ENCODE measurements at regions of chr10 and their contacts with region 1.

Region 1: GRCh38 chr10:43619368-43619767 is 13.1 kb downstream of the ZNF485 start:
- DNase-seq: no peak
- ATAC-seq: no peak
- H3K4me3 ChIP-seq: no peak overlapping the region
- H3K27ac ChIP-seq: no peak overlapping the region
- H3K4me1 ChIP-seq: no peaks in the 10 kb centered on the region
- H3K27me3 ChIP-seq: no peaks in the 10 kb centered on the region
- CTCF ChIP-seq: no peak

Region 2: DNA sequence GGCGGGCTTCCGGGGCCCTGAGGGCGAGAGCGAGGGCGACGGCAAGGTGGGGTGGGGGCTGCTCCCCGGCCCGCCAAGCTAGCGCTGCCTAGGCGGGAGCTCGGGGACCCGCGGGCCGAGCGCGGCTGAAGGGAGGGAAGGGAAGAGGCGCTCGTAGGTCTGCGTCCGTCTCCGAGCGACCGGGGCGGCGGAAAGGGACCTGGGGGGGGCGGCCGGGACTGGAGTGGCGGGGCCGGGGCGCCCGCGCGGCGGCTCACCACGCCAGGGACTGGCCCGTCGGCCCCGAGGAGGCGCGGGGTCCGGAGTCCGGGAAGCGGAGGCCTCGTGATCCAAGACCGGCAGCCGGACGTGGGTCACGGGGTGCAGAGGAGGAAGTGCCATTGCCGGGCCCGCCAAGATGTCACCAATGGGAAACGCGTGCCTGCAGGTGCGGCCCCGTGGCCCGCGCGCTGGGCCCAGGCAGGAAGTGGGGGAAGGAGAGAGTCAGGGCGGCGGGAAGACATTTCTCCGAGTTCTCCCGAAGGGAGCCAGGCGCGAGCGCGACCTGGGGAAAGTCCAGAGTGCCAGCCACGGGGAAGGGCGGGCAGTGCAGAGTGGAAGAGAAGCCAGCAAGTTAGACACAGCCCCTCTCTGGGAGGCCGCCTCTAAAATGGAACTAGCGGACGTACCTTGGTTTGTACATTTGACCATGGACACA is 222.3 kb before region 1 on chr10:
- intact Hi-C with region 1: no loop called
- DNase-seq: peak; percentile 88 to 92
- ATAC-seq: peak; percentile 91 to 95 (median 92)
- H3K4me3 ChIP-seq: peak overlapping the region; percentile 75
- H3K27ac ChIP-seq: peak overlapping the region; percentile 94
- H3K4me1 ChIP-seq: peaks cover 54% of the 10 kb centered on the region
- H3K27me3 ChIP-seq: no peaks in the 10 kb centered on the region
- CTCF ChIP-seq: no peak

Region 3: GRCh38 chr10:43594944-43595589 is 24.3 kb before region 1 on chr10:
- intact Hi-C with region 1: loop called in 1 of 2 experiments (anchors 1 kb)
- DNase-seq: no peak
- ATAC-seq: no peak
- H3K4me3 ChIP-seq: peak overlapping the region; percentile 27
- H3K27ac ChIP-seq: no peak overlapping the region
- H3K4me1 ChIP-seq: no peaks in the 10 kb centered on the region
- H3K27me3 ChIP-seq: peaks cover 0 to 2% (median 0%) of the 10 kb centered on the region in 3 donors
- CTCF ChIP-seq: no peak

Measured in psoas muscle (tissue), 8 donors.